MCF 10A (cell line): ENCODE measurements at regions of chr2 and their contacts with region 1.

Region 1: DNA sequence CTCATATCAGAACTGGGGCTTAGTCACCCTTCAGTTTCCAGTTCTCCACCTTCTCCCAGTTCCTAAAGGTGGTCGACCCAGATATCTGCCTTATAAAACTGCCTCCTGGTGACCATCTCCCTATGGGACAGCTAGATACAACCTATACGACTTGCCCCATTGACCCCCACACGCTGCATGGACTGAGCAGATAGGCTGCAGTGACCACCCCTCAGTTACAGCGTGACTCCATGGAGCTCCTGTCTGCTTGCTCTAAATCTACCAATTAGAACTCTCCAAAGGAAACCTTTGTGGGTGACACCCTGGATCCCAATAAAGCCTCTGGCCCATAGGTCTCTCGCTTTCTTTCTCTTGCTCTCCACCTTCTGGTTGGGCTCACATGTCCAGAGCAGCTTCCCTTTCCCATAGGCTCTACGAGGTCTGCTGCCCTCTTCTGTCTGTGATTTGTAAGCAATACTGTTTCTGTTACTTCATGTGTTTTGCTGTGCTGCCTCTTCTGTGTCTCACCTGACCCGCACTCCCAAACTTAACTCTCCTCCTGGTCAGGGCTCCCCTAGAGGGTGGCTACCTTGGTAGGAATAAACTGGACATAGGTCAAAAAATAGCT is 971.3 kb upstream of the FAM98A start:
- DNase-seq: peak; percentile 35
- H3K4me3 Mint-ChIP-seq: no peak overlapping the region
- H3K27ac Mint-ChIP-seq: no peak overlapping the region
- H3K4me1 Mint-ChIP-seq: peaks cover 4% of the 10 kb centered on the region
- H3K27me3 Mint-ChIP-seq: no peaks in the 10 kb centered on the region
- CTCF ChIP-seq: peak; percentile 65

Region 2: DNA sequence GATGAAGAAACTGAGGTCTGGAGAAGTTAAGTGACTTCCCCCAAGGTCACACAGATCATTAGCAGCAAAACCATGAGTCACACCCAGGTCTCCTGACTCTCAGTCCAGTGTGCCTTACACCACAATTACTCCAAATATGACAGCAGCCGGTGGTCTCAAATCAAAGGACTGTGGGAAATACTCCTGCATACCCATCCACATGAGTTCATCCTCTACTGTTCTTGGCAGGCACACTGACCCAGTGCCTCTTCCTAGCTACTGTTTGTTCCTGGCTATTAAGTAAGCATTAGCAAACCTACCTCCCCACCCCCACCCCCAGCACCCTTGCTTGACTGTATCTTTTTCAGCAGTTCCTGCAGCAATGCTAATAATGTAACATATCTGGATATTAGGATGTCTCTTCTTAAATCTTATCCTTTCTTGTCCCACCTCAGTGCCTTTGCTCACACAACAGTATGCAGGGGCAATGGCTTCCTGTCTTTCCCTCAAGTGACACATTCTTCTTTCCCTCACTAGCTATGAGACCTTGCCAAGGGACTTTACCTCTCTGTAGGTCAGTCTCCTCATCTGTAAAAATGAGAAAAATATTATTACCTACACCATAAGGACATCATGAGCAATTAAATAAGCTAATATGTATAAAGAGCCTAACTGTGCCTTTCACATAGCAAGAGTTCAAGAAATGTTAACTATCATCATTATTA is 1017.5 kb before region 1 on chr2:
- CTCF ChIA-PET with region 1: no interaction called
- POLR2A ChIA-PET with region 1: no interaction called
- intact Hi-C with region 1: no loop called
- DNase-seq: no peak
- H3K4me3 Mint-ChIP-seq: no peak overlapping the region
- H3K27ac Mint-ChIP-seq: no peak overlapping the region
- H3K4me1 Mint-ChIP-seq: no peaks in the 10 kb centered on the region
- H3K27me3 Mint-ChIP-seq: peaks cover 9% of the 10 kb centered on the region
- CTCF ChIP-seq: no peak

Region 3: DNA sequence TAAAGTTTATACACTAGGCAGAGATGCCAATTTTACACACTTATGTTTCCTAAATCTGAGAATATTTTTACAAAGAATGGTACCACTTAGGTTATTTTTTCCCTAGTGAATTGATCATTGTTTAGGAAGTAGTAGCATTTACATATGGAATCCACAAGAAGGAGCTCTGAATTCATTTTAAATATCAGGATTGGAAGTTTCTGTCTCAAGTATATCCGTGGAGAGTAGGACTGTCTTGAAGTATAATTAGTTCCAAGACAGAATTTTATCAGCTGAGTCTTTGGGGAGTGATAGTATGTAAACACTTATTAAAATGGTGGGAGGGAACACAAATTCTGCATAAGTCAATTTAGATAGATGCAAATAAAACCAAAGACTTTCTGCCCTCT is 889.0 kb before region 1 on chr2:
- CTCF ChIA-PET with region 1: interaction called, 36 read pairs
- POLR2A ChIA-PET with region 1: no interaction called
- intact Hi-C with region 1: loop called (anchors 2 kb)
- DNase-seq: no peak
- H3K4me3 Mint-ChIP-seq: no peak overlapping the region
- H3K27ac Mint-ChIP-seq: no peak overlapping the region
- H3K4me1 Mint-ChIP-seq: no peaks in the 10 kb centered on the region
- H3K27me3 Mint-ChIP-seq: no peaks in the 10 kb centered on the region
- CTCF ChIP-seq: peak; percentile 57

Region 4: DNA sequence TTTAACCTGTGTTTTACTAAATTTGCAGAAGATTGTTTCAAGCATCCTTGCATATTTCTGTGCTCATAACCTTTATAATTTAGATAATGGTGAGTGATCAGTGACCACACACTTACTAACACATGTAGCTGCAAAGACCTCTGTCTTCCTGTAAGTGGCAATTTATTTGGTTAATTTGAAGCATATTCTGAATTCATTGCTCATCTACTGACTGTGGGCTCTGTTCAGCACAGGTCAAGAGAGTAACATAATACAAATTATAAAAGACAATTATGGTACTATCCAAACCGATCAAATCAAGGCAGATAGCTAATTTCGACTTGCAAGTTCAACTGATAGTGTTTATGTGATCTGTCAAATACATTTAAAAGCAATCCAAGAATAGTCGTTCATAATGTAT is 747.4 kb before region 1 on chr2:
- CTCF ChIA-PET with region 1: no interaction called
- POLR2A ChIA-PET with region 1: no interaction called
- intact Hi-C with region 1: no loop called
- DNase-seq: no peak
- H3K4me3 Mint-ChIP-seq: no peak overlapping the region
- H3K27ac Mint-ChIP-seq: no peak overlapping the region
- H3K4me1 Mint-ChIP-seq: peaks cover 17% of the 10 kb centered on the region
- H3K27me3 Mint-ChIP-seq: no peaks in the 10 kb centered on the region
- CTCF ChIP-seq: no peak

Region 5: GRCh38 chr2:34025186-34025585 is 545.2 kb before region 1 on chr2:
- CTCF ChIA-PET with region 1: interaction called, 16 read pairs
- POLR2A ChIA-PET with region 1: no interaction called
- intact Hi-C with region 1: no loop called
- DNase-seq: no peak
- H3K4me3 Mint-ChIP-seq: no peak overlapping the region
- H3K27ac Mint-ChIP-seq: no peak overlapping the region
- H3K4me1 Mint-ChIP-seq: no peaks in the 10 kb centered on the region
- H3K27me3 Mint-ChIP-seq: no peaks in the 10 kb centered on the region
- CTCF ChIP-seq: no peak

Region 6: DNA sequence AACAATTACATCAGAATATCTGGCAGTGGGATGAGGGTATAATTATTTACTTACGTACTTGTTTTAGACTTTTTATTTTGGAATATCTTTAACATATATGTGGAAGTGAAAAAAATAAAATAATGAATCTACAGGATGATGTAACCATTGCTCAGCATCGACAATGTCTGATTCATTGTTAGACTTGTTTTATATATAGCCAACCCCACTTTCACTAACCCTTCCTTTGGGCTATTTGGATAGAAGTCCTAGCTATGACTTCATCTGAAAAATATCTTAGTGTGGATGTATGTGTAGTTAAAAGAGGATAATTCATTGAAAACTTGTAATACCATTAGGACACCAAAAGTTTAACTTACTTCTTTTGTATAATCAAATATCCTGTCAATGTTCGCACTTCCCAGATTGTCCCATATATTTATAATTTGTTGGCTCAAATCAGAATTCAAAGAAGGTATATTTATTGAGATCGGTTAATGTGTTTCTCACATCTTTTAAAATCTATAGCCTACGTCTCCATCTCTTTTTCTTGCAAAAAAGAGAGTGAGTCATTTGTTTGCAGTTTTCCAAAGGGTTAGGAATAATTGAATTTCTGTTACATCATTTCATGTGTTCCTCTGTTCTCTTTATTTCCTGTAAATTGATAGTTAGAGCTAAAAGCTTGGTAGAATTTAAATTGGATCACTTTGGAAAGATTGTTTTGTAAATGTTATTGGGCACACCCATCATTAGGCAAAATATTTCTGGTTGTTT is 465.2 kb before region 1 on chr2:
- CTCF ChIA-PET with region 1: interaction called, 38 read pairs
- POLR2A ChIA-PET with region 1: no interaction called
- intact Hi-C with region 1: loop called (anchors 2 kb)
- DNase-seq: peak; percentile 69
- H3K4me3 Mint-ChIP-seq: peak overlapping the region; percentile 45
- H3K27ac Mint-ChIP-seq: peak overlapping the region; percentile 82
- H3K4me1 Mint-ChIP-seq: peaks cover 25% of the 10 kb centered on the region
- H3K27me3 Mint-ChIP-seq: no peaks in the 10 kb centered on the region
- CTCF ChIP-seq: no peak

Region 7: DNA sequence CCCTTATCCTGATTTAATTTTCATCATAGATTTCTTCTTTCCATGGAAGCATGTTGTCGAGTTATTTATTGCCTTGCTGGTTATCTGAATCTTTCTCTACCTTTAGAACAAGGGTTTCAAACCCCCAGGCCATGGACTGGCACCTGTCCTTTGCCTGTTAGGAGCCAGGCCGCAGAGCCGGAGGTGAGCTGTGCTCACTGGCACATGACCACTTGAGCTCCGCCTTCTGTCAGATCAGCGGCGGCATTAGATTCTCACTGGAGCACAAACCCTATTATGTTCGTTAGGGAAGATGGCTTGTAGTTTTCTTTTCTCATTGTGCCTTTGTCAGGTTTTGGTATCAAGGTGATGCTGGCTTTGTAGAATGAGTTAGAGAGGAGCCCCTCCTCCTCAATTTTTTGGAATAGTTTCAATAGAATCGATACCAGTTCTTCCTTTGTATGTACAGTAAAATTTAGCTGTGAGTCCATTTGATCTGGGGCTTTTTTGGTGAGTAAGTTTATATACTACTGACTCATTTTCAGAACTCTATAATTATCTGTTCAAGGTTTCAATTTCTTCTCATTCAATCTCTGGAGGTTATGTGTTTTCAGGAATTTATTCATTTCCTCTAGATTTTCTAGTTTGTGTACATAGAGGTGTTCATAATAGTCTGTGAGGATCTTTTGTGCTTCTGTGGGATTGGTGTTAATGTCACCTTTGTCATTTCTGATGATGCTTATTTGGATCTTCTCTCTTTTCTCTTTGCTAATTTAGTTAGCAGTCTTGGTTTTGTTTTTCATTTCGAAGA is 303.3 kb before region 1 on chr2:
- CTCF ChIA-PET with region 1: no interaction called
- POLR2A ChIA-PET with region 1: no interaction called
- intact Hi-C with region 1: no loop called
- DNase-seq: no peak
- H3K4me3 Mint-ChIP-seq: no peak overlapping the region
- H3K27ac Mint-ChIP-seq: no peak overlapping the region
- H3K4me1 Mint-ChIP-seq: no peaks in the 10 kb centered on the region
- H3K27me3 Mint-ChIP-seq: no peaks in the 10 kb centered on the region
- CTCF ChIP-seq: no peak

Region 8: DNA sequence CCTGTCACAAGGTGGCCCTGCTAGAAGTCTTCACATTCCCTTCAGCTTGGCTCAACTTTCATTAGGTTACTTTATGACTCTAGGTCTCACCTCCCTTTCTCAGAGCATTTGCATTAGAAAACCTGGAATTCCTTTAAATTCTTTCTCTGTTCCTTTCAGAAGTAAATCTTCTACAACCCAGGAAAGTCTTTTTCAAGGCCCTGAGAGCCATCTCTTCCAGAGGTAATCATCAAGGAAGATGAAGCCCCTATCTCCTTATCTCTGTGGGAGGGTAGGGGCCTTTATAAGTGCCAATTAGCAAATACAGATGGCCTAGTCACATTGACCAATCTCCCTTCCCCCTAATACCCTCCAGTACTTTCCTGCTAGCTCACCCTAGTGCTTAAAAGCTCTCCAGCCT is 123.3 kb before region 1 on chr2:
- CTCF ChIA-PET with region 1: no interaction called
- POLR2A ChIA-PET with region 1: no interaction called
- intact Hi-C with region 1: no loop called
- DNase-seq: no peak
- H3K4me3 Mint-ChIP-seq: no peak overlapping the region
- H3K27ac Mint-ChIP-seq: no peak overlapping the region
- H3K4me1 Mint-ChIP-seq: no peaks in the 10 kb centered on the region
- H3K27me3 Mint-ChIP-seq: no peaks in the 10 kb centered on the region
- CTCF ChIP-seq: no peak

Region 9: GRCh38 chr2:34547340-34547739 is 23.0 kb before region 1 on chr2:
- CTCF ChIA-PET with region 1: interaction called, 10 read pairs
- POLR2A ChIA-PET with region 1: no interaction called
- intact Hi-C with region 1: no loop called
- DNase-seq: no peak
- H3K4me3 Mint-ChIP-seq: no peak overlapping the region
- H3K27ac Mint-ChIP-seq: no peak overlapping the region
- H3K4me1 Mint-ChIP-seq: peaks cover 11% of the 10 kb centered on the region
- H3K27me3 Mint-ChIP-seq: no peaks in the 10 kb centered on the region
- CTCF ChIP-seq: no peak